ENCODE measurements at regions of chr2 and their contacts with region 1.

Region 1: GRCh38 chr2:30208452-30208851 is 22.9 kb upstream of the LBH start:
- DNase-seq: peak; percentile 44 to 84
- ATAC-seq: peak; percentile 91 to 97
- H3K4me3 ChIP-seq: no peak overlapping the region
- H3K27ac ChIP-seq: peak overlapping the region; percentile 35 to 67; a peak in 4 of 6 replicates
- H3K4me1 ChIP-seq: peaks cover 5% of the 10 kb centered on the region; the same call in 2 of the 3 replicates
- CTCF ChIP-seq: peak; percentile 98
- EP300 ChIP-seq: no peak
- POLR2A ChIP-seq: no peak
- RAD21 ChIP-seq: peak; percentile 99 to 100

Region 2: GRCh38 chr2:30231212-30231995 is 23.0 kb after region 1 on chr2 and contains the start of gene LBH:
- CTCF ChIA-PET with region 1: interaction called, 107 read pairs
- POLR2A ChIA-PET with region 1: interaction called, 10 read pairs
- DNase-seq: peak; percentile 87 to 88
- ATAC-seq: peak; percentile 59 to 68
- H3K4me3 ChIP-seq: peak within 1 kb of the TSS; percentile 97
- H3K27ac ChIP-seq: peak within 1 kb of the TSS; percentile 92 to 94
- H3K4me1 ChIP-seq: peaks cover 33% of the 10 kb centered on the region
- CTCF ChIP-seq: 0 out of 3 replicates have a peak, but pooled peaks have one; percentile 11
- EP300 ChIP-seq: no peak
- POLR2A ChIP-seq: peak; percentile 100
- RAD21 ChIP-seq: 0 out of 5 replicates have a peak, but pooled peaks of 1 of the 2 experiments have one; percentile 21
- polyA plus RNA-seq, gene LBH: 149 and 163 TPM in 2 replicates

Region 3: GRCh38 chr2:30334762-30335363 is 126.4 kb after region 1 on chr2:
- CTCF ChIA-PET with region 1: interaction called, 12 read pairs
- POLR2A ChIA-PET with region 1: no interaction called
- DNase-seq: peak in 1 of 2 experiments; percentile 25
- ATAC-seq: peak in 1 of 2 experiments; percentile 61; a peak in 3 of 6 replicates
- H3K4me3 ChIP-seq: no peak overlapping the region
- H3K27ac ChIP-seq: peak overlapping the region in 1 of 2 experiments; percentile 36; a peak in 2 of 6 replicates
- H3K4me1 ChIP-seq: peaks cover 10% of the 10 kb centered on the region; the same call in 1 of the 3 replicates
- CTCF ChIP-seq: peak; percentile 19; the same call in 2 of the 3 replicates
- EP300 ChIP-seq: no peak
- POLR2A ChIP-seq: no peak
- RAD21 ChIP-seq: peak; percentile 40 to 41

Region 4: GRCh38 chr2:30475542-30475941 is 267.1 kb after region 1 on chr2:
- CTCF ChIA-PET with region 1: interaction called, 19 read pairs
- POLR2A ChIA-PET with region 1: no interaction called
- DNase-seq: no peak
- ATAC-seq: no peak
- H3K4me3 ChIP-seq: no peak overlapping the region
- H3K27ac ChIP-seq: no peak overlapping the region; a peak in 1 of 6 replicates
- H3K4me1 ChIP-seq: peaks cover 19% of the 10 kb centered on the region
- CTCF ChIP-seq: peak; percentile 48
- EP300 ChIP-seq: no peak
- POLR2A ChIP-seq: no peak
- RAD21 ChIP-seq: peak; percentile 47 to 68; a peak in 4 of 5 replicates

Region 5: GRCh38 chr2:30686000-30686399 is 477.5 kb after region 1 on chr2:
- CTCF ChIA-PET with region 1: interaction called, 31 read pairs
- POLR2A ChIA-PET with region 1: no interaction called
- DNase-seq: peak in 1 of 2 experiments; percentile 55
- ATAC-seq: peak; percentile 58 to 80; a peak in 4 of 6 replicates
- H3K4me3 ChIP-seq: no peak overlapping the region
- H3K27ac ChIP-seq: no peak overlapping the region
- H3K4me1 ChIP-seq: no peaks in the 10 kb centered on the region
- CTCF ChIP-seq: 0 out of 3 replicates have a peak, but pooled peaks have one; percentile 12
- EP300 ChIP-seq: no peak
- POLR2A ChIP-seq: no peak
- RAD21 ChIP-seq: peak in 1 of 2 experiments; percentile 3; a peak in 1 of 5 replicates

Measured in A549 (cell line).